Activated CD4-positive, alpha-beta memory T cell treated with anti-CD3 and anti-CD28 coated beads, Interleukin-2, amount 10 ng/mL, durations not matched to agents 7 days and 5 days (primary cell): ENCODE measurements at regions of chr14 and their contacts with region 1.

Region 1: GRCh38 chr14:69685716-69686115 is 74.3 kb downstream of the SUSD6 start:
- DNase-seq: peak; percentile 60
- H3K4me3 Mint-ChIP-seq: peak overlapping the region; percentile 47
- H3K27ac Mint-ChIP-seq: peak overlapping the region; percentile 88
- H3K4me1 Mint-ChIP-seq: peaks cover 80% of the 10 kb centered on the region
- H3K27me3 Mint-ChIP-seq: no peaks in the 10 kb centered on the region

Region 2: DNA sequence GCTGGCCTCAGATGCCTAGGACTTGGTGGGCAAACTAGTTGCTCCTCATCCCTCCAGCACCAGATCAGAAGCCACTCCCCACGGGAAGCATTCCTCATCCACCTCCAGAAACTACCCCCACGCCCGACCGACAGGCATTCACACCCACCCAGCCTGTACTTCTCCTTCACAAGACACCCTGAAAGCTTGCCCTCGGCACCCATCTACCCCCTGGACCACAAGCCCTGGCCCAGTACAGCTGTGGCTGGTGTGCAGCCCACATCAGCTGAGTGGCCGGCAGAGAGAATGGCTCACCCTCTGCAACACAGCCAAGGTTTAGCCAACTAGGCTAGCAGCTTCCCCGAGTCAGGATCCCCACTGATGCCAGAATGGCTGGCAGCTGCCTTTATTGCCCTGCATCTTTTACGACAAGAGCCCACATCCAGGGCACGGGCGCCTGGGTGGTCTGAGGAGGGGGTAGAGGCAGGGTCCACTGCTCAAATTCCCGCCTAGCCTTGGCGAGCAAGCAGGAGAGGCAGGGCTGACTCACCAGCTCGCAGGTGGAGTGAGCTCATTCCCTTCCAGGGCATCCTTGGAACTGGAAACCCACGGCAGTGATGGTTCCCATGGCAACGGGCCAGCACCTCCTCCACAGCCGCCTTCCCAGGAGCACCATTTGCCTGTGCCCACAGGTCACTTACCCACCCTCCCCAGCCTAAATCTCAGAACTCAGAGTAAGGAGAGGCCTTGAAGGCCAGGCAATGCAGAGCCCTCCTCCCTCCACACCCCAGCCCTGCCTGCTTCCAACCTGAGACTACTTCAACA is 723.7 kb before region 1 on chr14:
- CTCF ChIA-PET with region 1: no interaction called
- POLR2A ChIA-PET with region 1: no interaction called
- DNase-seq: no peak
- H3K4me3 Mint-ChIP-seq: no peak overlapping the region
- H3K27ac Mint-ChIP-seq: no peak overlapping the region
- H3K4me1 Mint-ChIP-seq: peaks cover 7% of the 10 kb centered on the region
- H3K27me3 Mint-ChIP-seq: no peaks in the 10 kb centered on the region

Region 3: DNA sequence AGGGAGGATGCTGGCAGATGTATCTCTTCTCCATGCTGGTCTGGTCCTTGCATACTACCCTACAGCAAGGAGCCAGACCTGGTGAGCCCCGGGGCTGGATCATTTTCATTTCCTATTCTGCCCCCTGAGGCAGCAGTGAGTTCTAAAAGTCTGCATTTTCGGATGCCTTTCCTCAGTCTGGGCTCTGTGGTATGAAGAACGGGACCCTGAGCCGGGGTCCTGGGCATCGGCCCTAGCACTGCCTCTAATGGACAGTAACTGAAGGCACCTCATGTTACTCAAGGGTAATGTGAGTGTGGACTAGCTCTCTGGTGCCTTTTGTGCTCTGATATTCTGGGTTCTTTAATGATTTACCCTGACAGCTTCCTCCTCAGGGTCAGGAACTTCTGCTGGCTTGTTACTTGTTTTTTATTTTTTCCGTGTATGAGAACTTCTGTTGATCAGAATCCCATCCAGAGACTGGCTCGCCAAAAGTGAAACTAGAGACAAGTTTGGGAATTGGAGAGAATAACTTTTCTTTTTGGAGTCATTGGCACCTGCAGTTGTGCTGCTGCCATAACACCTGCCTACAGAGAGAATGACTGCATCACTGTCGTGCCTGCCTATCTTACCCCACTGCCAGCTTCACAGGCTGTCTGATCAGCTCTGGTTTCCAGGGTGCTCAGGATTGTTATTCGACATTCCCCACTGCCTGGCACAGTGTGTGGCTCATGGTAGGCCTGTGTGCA is 12.0 kb before region 1 on chr14:
- CTCF ChIA-PET with region 1: interaction called, 3 read pairs
- POLR2A ChIA-PET with region 1: interaction called, 43 read pairs
- DNase-seq: no peak
- H3K4me3 Mint-ChIP-seq: peak overlapping the region; percentile 31
- H3K27ac Mint-ChIP-seq: peak overlapping the region; percentile 95
- H3K4me1 Mint-ChIP-seq: peaks cover 89% of the 10 kb centered on the region
- H3K27me3 Mint-ChIP-seq: no peaks in the 10 kb centered on the region

Region 4: GRCh38 chr14:69715725-69716477 is 30.2 kb after region 1 on chr14:
- CTCF ChIA-PET with region 1: interaction called, 7 read pairs
- POLR2A ChIA-PET with region 1: interaction called, 10 read pairs
- DNase-seq: no peak
- H3K4me3 Mint-ChIP-seq: peak overlapping the region; percentile 22
- H3K27ac Mint-ChIP-seq: peak overlapping the region; percentile 82
- H3K4me1 Mint-ChIP-seq: peaks cover 76% of the 10 kb centered on the region
- H3K27me3 Mint-ChIP-seq: no peaks in the 10 kb centered on the region

Region 5: DNA sequence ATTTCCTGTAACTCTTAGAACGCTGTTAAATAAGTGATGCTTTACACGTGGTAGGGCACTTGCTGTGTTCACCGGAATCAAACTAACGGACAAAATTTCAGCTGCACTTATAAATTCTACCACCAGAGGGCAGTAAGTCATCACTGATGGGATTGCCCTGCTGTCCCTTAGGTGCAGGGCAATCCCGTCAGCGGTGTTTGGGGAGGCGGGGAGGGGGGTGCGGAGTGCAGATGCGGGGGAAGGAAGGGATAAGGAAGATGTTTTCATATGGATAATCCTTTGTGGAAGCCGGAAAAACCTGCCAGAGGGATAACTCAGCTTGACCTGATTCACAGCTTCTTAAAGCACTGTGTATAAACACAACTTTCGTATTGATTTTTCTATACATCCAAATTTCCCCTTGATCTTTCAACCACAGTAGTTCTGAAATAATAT is 133.1 kb after region 1 on chr14:
- CTCF ChIA-PET with region 1: no interaction called
- POLR2A ChIA-PET with region 1: no interaction called
- DNase-seq: peak; percentile 50
- H3K4me3 Mint-ChIP-seq: no peak overlapping the region
- H3K27ac Mint-ChIP-seq: no peak overlapping the region
- H3K4me1 Mint-ChIP-seq: peaks cover 2% of the 10 kb centered on the region
- H3K27me3 Mint-ChIP-seq: peaks cover 11% of the 10 kb centered on the region